CD4-positive, alpha-beta memory T cell (primary cell): ENCODE measurements at regions of chr13 and their contacts with region 1.

Region 1: GRCh38 chr13:102580552-102581169 is 16.1 kb upstream of the TPP2 start:
- DNase-seq: peak; percentile 57 to 67 (median 63)
- H3K4me3 ChIP-seq: no peak overlapping the region
- H3K4me3 Mint-ChIP-seq: no peak overlapping the region
- H3K27ac ChIP-seq: no peak overlapping the region
- H3K27ac Mint-ChIP-seq: peak overlapping the region in 1 of 7 donors; percentile 58
- H3K4me1 ChIP-seq: peaks cover 9% of the 10 kb centered on the region
- H3K4me1 Mint-ChIP-seq: peaks cover 5 to 14% (median 8%) of the 10 kb centered on the region in 4 donors
- H3K27me3 ChIP-seq: no peaks in the 10 kb centered on the region
- H3K27me3 Mint-ChIP-seq: peaks cover 6 to 8% of the 10 kb centered on the region in 2 donors

Region 2: GRCh38 chr13:102620516-102620915 is 39.9 kb after region 1 on chr13:
- CTCF ChIA-PET with region 1: interaction called, 3 read pairs
- POLR2A ChIA-PET with region 1: no interaction called
- intact Hi-C with region 1: loop called (anchors 5 kb)
- DNase-seq: no peak
- H3K4me3 ChIP-seq: no peak overlapping the region
- H3K4me3 Mint-ChIP-seq: no peak overlapping the region
- H3K27ac ChIP-seq: no peak overlapping the region
- H3K27ac Mint-ChIP-seq: peak overlapping the region in 1 of 7 donors; percentile 80
- H3K4me1 ChIP-seq: no peaks in the 10 kb centered on the region
- H3K4me1 Mint-ChIP-seq: peaks cover 0 to 14% (median 5%) of the 10 kb centered on the region in 4 donors
- H3K27me3 ChIP-seq: no peaks in the 10 kb centered on the region
- H3K27me3 Mint-ChIP-seq: no peaks in the 10 kb centered on the region

Region 3: GRCh38 chr13:102724923-102725322 is 144.3 kb after region 1 on chr13:
- CTCF ChIA-PET with region 1: interaction called, 15 read pairs
- POLR2A ChIA-PET with region 1: no interaction called
- intact Hi-C with region 1: no loop called
- DNase-seq: peak in 1 of 5 donors; percentile 2
- H3K4me3 ChIP-seq: no peak overlapping the region
- H3K4me3 Mint-ChIP-seq: no peak overlapping the region
- H3K27ac ChIP-seq: no peak overlapping the region
- H3K27ac Mint-ChIP-seq: no peak overlapping the region
- H3K4me1 ChIP-seq: no peaks in the 10 kb centered on the region
- H3K4me1 Mint-ChIP-seq: peaks cover 0 to 3% (median under 1%) of the 10 kb centered on the region in 4 donors
- H3K27me3 ChIP-seq: no peaks in the 10 kb centered on the region
- H3K27me3 Mint-ChIP-seq: peaks cover 5 to 13% of the 10 kb centered on the region in 2 donors

Region 4: GRCh38 chr13:102800145-102801041 is 219.7 kb after region 1 on chr13:
- CTCF ChIA-PET with region 1: interaction called, 18 read pairs
- POLR2A ChIA-PET with region 1: interaction called, 3 read pairs
- intact Hi-C with region 1: loop called (anchors 1 kb)
- DNase-seq: peak; percentile 75 to 83 (median 81)
- H3K4me3 ChIP-seq: peak overlapping the region; percentile 69 to 76
- H3K4me3 Mint-ChIP-seq: peak overlapping the region; percentile 87 to 95 (median 90)
- H3K27ac ChIP-seq: peak overlapping the region; percentile 46
- H3K27ac Mint-ChIP-seq: peak overlapping the region in 6 of 7 donors; percentile 43 to 86 (median 69)
- H3K4me1 ChIP-seq: peaks cover 18% of the 10 kb centered on the region
- H3K4me1 Mint-ChIP-seq: peaks cover 18 to 32% (median 21%) of the 10 kb centered on the region in 4 donors
- H3K27me3 ChIP-seq: no peaks in the 10 kb centered on the region
- H3K27me3 Mint-ChIP-seq: peaks cover 1 to 6% of the 10 kb centered on the region in 2 donors

Region 5: GRCh38 chr13:102845630-102846260 is 265.1 kb after region 1 on chr13 and contains the start of gene ERCC5:
- CTCF ChIA-PET with region 1: interaction called, 47 read pairs
- POLR2A ChIA-PET with region 1: interaction called, 9 read pairs
- intact Hi-C with region 1: loop called (anchors 1 kb)
- DNase-seq: peak; percentile 95 to 98 (median 97)
- H3K4me3 ChIP-seq: peak within 1 kb of the TSS; percentile 88 to 92
- H3K4me3 Mint-ChIP-seq: peak within 1 kb of the TSS; percentile 97 to 99 (median 98)
- H3K27ac ChIP-seq: peak within 1 kb of the TSS; percentile 96
- H3K27ac Mint-ChIP-seq: peak within 1 kb of the TSS; percentile 98 to 100 (median 99)
- H3K4me1 ChIP-seq: peaks cover 46% of the 10 kb centered on the region
- H3K4me1 Mint-ChIP-seq: peaks cover 27 to 55% (median 37%) of the 10 kb centered on the region in 4 donors
- H3K27me3 ChIP-seq: no peaks in the 10 kb centered on the region
- H3K27me3 Mint-ChIP-seq: no peaks in the 10 kb centered on the region
- total RNA-seq, gene ERCC5: 134 to 136 TPM

Region 6: DNA sequence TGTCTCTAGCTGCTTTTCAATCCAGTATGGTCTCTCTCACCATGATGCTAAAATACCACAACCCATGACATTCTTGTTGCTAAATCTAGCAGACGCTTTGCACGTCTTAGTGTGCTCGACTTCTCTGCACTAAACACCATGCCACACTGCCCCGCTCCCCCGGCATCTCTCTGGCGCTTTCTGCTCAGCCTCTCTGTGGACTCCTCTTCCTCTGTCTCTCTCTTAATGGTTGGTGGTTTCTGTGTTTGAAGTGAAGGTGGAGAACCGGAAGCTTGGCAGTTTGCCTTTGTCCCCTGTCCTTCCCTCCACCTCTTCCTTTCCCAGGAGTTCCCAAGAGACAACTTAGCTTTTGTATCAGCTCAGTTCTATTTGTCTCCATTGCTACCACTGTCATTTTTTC is 274.0 kb after region 1 on chr13:
- CTCF ChIA-PET with region 1: interaction called, 28 read pairs
- POLR2A ChIA-PET with region 1: no interaction called
- intact Hi-C with region 1: no loop called
- DNase-seq: peak in 3 of 5 donors; percentile 11 to 31 (median 20)
- H3K4me3 ChIP-seq: no peak overlapping the region
- H3K4me3 Mint-ChIP-seq: peak overlapping the region in 5 of 8 donors; percentile 35 to 73 (median 65)
- H3K27ac ChIP-seq: peak overlapping the region; percentile 29
- H3K27ac Mint-ChIP-seq: peak overlapping the region in 5 of 7 donors; percentile 84 to 92 (median 90)
- H3K4me1 ChIP-seq: peaks cover 37% of the 10 kb centered on the region
- H3K4me1 Mint-ChIP-seq: peaks cover 40 to 50% (median 42%) of the 10 kb centered on the region in 4 donors
- H3K27me3 ChIP-seq: no peaks in the 10 kb centered on the region
- H3K27me3 Mint-ChIP-seq: no peaks in the 10 kb centered on the region

Region 7: DNA sequence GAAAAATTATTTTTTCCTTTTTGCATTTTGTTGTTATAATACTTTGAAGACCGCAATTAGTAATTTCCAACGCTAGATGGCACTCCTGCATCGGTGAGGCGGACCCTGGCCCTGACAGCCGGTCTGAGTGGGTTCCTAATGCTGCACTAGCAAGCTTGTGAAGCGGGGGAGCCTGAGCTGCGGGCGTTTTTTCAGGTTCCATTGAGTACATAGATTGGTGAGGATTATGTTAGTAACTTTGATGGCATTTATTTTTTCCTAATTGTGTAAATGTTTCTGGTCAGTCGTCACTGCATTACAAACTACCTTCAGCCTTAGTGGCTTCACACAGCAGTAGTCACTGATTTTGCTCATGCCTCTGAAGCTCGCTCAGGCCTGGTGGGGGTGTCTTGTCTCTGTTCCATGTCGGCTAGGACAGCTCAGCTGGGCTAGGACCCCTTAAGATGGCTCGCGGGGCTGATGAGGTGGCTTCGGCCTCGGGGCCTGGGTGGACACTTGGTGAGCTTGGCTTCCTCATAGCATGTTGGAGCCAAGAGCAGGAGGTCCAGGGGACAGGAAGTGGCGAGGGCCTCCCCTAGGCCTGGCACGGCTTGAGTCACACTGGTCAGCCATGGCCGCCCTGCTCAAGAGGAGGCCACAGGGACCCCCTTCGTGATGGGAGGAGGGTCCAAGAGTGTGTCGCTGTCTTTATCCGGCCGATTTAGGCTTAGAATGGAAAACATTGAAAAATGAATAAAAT is 290.2 kb after region 1 on chr13:
- CTCF ChIA-PET with region 1: interaction called, 13 read pairs
- POLR2A ChIA-PET with region 1: no interaction called
- intact Hi-C with region 1: no loop called
- DNase-seq: peak; percentile 36 to 49 (median 42)
- H3K4me3 ChIP-seq: no peak overlapping the region
- H3K4me3 Mint-ChIP-seq: peak overlapping the region in 3 of 8 donors; percentile 17 to 72 (median 56)
- H3K27ac ChIP-seq: no peak overlapping the region
- H3K27ac Mint-ChIP-seq: peak overlapping the region in 6 of 7 donors; percentile 14 to 84 (median 80)
- H3K4me1 ChIP-seq: peaks cover 14% of the 10 kb centered on the region
- H3K4me1 Mint-ChIP-seq: peaks cover 18 to 35% (median 23%) of the 10 kb centered on the region in 4 donors
- H3K27me3 ChIP-seq: no peaks in the 10 kb centered on the region
- H3K27me3 Mint-ChIP-seq: no peaks in the 10 kb centered on the region